ENCODE measurements at regions of chr16 and their contacts with region 1.

Region 1: DNA sequence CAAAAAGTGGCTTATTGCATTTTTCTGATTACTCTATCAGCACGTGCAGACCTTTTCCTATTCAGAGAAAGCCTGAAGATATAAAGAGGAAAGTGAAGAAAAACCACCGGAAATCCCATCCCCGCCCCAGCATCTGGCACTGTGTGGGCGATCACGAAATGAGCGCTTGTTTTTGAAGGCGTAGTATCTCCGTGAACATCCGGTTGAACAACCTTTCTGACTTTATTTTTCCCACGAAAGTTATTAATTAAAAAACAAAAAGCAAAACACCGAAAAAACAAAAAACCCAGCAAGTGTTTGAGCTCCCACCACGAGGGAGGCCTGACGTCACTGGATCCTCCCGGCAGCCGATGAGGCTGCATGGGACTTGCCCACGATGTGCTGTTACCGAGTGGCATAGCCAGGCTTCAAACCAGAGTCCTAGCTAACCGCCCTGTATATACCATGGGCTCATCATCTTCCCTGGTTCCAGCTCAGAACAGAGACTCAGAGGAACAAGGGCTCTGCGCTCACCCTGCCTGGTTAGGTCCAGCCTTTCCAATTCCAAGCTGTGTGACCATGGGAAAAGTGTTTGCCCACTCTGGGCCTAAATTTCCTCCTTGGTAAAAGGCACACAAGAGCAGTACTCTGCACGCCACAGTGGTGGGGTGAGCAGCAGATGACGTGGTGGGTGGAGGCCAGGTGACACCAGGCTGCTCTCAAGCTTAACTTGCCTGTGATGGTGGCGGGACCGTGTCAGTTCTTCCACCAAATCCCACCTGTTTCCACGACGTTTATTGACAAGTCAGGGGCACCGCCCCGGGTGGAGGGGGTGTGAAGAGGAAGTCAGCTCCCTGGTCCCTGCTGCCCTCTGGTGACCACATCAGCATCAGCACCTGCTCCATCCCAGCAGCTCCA is 34.3 kb upstream of the IL21R start:
- DNase-seq: peak; percentile 76
- ATAC-seq: peak; percentile 78
- H3K4me3 Mint-ChIP-seq: peak overlapping the region; percentile 70
- H3K27ac Mint-ChIP-seq: peak overlapping the region; percentile 96
- H3K4me1 Mint-ChIP-seq: peaks cover 71% of the 10 kb centered on the region
- H3K27me3 Mint-ChIP-seq: no peaks in the 10 kb centered on the region
- CTCF ChIP-seq: no peak

Region 2: GRCh38 chr16:25838724-25839186 is 1529.0 kb before region 1 on chr16:
- CTCF ChIA-PET with region 1: no interaction called
- POLR2A ChIA-PET with region 1: no interaction called
- intact Hi-C with region 1: loop called (anchors 10 kb)
- DNase-seq: no peak
- ATAC-seq: no peak
- H3K4me3 Mint-ChIP-seq: no peak overlapping the region
- H3K27ac Mint-ChIP-seq: no peak overlapping the region
- H3K4me1 Mint-ChIP-seq: no peaks in the 10 kb centered on the region
- H3K27me3 Mint-ChIP-seq: peaks cover 5% of the 10 kb centered on the region
- CTCF ChIP-seq: peak; percentile 72

Region 3: DNA sequence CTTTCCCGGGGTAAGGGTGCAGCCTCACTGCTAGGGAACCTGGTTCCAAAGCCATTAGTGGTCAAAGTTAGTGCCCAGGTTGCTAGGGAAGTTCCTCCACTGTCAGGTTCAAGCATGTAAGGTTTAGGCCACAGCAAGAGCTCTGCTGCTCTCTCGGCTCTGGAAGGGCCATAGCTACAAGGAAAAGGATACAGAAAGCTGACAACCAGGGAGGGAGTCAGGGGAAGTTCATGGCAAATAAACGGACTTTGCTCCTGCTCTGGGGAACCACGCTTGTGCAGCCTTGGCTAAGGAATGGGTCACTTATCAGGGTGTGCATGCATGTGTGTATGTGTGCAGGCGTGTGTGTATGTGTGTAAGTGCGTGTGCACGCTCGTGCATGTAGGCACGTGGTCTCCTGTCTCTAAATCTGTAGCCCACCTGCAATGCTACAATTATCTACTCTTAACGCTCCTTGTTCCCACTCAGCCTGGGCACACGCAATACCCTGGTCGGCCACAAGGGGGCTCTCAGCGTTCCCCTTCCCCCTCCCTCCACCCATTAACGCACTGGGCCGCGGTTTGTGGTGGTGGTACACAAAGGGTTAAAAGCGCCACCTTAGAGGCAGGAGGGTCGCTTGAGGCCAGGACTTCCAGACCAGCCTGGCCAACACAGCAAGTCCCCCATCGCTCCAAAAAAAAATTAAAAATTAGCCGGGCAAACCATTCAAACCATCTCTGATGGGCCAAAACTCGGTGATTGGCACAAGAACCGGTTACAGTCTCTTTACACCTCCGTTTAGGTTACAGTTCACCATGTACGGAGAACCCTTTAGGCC is 212.8 kb before region 1 on chr16:
- CTCF ChIA-PET with region 1: interaction called, 36 read pairs
- POLR2A ChIA-PET with region 1: no interaction called
- intact Hi-C with region 1: loop called (anchors 1 kb)
- DNase-seq: peak; percentile 64
- ATAC-seq: peak; percentile 93
- H3K4me3 Mint-ChIP-seq: no peak overlapping the region
- H3K27ac Mint-ChIP-seq: peak overlapping the region; percentile 59
- H3K4me1 Mint-ChIP-seq: peaks cover 11% of the 10 kb centered on the region
- H3K27me3 Mint-ChIP-seq: no peaks in the 10 kb centered on the region
- CTCF ChIP-seq: peak; percentile 94

Region 4: DNA sequence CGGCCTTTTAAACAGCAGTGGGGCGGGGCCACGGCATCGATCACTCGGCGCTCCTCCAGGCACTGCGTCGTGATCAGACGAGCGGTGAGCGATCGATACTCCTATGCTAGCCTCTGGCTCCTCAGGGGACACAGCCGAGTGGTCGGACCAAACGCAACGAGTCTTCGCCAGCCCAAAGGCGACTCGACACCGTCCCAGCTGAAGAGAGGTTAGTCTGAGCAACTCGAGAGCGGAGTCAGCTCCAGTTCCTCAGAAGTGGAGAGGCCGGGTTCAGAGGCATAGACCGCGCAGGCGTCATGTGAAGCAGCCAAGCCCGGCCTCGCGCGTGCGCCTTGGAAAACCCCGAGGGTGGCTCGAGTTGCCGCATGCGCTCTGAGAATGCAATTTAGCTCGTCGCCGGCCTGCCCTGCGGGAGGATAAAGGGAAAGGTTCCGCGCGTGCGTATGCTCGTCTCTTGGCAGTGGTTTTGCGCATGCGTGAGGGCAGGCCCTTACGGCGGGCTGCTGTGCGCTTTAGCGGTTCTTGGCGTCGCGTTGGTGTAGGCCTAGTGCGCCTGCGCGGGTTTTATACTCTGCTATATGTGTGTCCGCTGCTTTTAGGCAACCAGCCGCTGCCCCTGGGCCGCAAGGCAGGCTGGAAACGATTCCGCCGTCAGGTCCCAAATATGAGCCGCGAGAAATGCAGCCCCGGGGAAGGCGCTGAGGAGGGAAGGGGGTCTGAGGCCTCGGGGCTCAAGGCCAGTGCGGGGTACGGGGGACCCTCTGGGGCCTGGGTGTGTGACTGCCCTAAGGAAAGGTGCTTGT is 164.1 kb before region 1 on chr16 and contains the start of gene KDM8:
- CTCF ChIA-PET with region 1: interaction called, 3 read pairs
- POLR2A ChIA-PET with region 1: interaction called, 29 read pairs
- intact Hi-C with region 1: loop called (anchors 1 kb)
- DNase-seq: peak; percentile 97
- ATAC-seq: peak; percentile 87
- H3K4me3 Mint-ChIP-seq: peak within 1 kb of the TSS; percentile 99
- H3K27ac Mint-ChIP-seq: peak within 1 kb of the TSS; percentile 100
- H3K4me1 Mint-ChIP-seq: peaks cover 66% of the 10 kb centered on the region
- H3K27me3 Mint-ChIP-seq: no peaks in the 10 kb centered on the region
- CTCF ChIP-seq: no peak
- total RNA-seq, gene KDM8: 13.4 and 17.9 TPM in 2 replicates

Region 5: DNA sequence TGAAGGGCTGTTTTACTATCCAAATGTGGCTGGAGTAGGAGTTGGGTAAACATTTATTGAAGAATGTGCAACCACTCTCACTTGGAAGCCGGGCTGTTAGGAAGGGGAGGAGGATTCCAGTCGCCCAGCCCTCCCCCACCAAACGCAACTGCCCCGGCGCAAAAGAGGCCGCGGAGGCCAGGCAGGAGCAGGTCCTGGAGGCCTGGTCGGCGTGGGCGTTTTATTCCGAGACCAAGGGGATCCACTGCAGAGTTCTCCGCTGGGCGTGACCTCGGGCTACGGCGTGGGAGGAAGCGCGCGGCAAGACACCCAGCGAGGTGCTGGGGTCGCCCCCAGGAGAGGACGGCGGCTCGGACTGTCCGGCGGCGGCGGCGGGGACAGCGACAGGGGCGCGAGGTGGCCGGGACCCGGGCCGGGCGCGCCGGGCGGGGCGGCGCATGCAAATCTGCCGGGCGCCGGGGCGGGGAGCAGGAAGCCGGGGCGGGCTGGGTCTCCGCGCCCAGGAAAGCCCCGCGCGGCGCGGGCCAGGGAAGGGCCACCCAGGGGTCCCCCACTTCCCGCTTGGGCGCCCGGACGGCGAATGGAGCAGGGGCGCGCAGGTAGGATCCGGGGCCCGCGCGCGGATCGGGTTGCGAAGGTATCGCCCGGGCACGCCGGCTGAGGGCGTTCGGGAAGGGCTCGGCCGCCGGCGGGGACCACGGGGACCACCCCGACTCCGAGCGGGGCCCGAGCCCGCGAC is 54.1 kb before region 1 on chr16 and contains the start of gene IL4R:
- CTCF ChIA-PET with region 1: interaction called, 7 read pairs
- POLR2A ChIA-PET with region 1: interaction called, 27 read pairs
- intact Hi-C with region 1: loop called (anchors 1 kb)
- DNase-seq: peak; percentile 77
- ATAC-seq: peak; percentile 49
- H3K4me3 Mint-ChIP-seq: peak within 1 kb of the TSS; percentile 88
- H3K27ac Mint-ChIP-seq: peak within 1 kb of the TSS; percentile 90
- H3K4me1 Mint-ChIP-seq: peaks cover 76% of the 10 kb centered on the region
- H3K27me3 Mint-ChIP-seq: no peaks in the 10 kb centered on the region
- CTCF ChIP-seq: no peak
- total RNA-seq, gene IL4R: 176 and 202 TPM in 2 replicates

Region 6: GRCh38 chr16:27401768-27402568 is 34.3 kb after region 1 on chr16 and contains the start of gene IL21R:
- CTCF ChIA-PET with region 1: interaction called, 53 read pairs
- POLR2A ChIA-PET with region 1: interaction called, 1,103 read pairs
- intact Hi-C with region 1: loop called (anchors 1 kb)
- DNase-seq: peak; percentile 76
- ATAC-seq: peak; percentile 53
- H3K4me3 Mint-ChIP-seq: peak within 1 kb of the TSS; percentile 99
- H3K27ac Mint-ChIP-seq: peak within 1 kb of the TSS; percentile 96
- H3K4me1 Mint-ChIP-seq: peaks cover 88% of the 10 kb centered on the region
- H3K27me3 Mint-ChIP-seq: no peaks in the 10 kb centered on the region
- CTCF ChIP-seq: no peak
- total RNA-seq, gene IL21R: 144 and 167 TPM in 2 replicates

Region 7: DNA sequence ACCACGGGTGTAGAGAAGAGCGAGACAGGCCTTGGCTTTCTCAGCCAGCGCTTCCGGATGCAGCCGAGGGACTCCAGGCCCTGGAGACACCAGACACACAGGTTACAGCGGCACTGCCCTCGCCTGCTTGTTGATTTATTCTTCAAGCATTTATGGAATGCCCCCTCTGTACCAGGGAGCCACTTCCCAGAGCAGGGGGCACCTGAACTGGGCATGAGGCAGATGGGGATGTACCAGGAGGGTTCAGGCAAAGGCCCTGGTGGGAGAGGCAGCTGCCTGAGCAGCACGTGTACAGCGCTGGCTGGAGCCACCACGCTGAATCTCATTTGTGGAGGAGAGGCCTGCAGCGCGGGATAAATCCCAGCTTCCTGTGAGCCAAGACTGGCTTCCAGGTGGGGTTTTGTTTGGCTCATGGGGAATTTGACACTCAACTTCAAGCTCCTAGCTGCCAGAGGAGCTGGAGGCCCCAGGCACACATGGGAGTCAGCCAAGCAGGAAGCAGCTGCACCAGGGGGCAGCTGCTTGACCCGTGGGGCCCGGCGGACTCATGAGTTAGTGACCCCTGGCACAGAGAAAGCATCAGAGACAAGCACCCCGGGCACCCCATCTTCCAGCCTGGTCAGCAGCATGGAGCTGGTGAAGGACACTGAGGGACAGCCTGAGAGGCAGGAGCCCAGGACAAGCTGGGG is 93.9 kb after region 1 on chr16:
- CTCF ChIA-PET with region 1: interaction called, 3 read pairs
- POLR2A ChIA-PET with region 1: interaction called, 6 read pairs
- intact Hi-C with region 1: loop called (anchors 1 kb)
- DNase-seq: no peak
- ATAC-seq: no peak
- H3K4me3 Mint-ChIP-seq: no peak overlapping the region
- H3K27ac Mint-ChIP-seq: no peak overlapping the region
- H3K4me1 Mint-ChIP-seq: peaks cover 8% of the 10 kb centered on the region
- H3K27me3 Mint-ChIP-seq: no peaks in the 10 kb centered on the region
- CTCF ChIP-seq: no peak

Region 8: DNA sequence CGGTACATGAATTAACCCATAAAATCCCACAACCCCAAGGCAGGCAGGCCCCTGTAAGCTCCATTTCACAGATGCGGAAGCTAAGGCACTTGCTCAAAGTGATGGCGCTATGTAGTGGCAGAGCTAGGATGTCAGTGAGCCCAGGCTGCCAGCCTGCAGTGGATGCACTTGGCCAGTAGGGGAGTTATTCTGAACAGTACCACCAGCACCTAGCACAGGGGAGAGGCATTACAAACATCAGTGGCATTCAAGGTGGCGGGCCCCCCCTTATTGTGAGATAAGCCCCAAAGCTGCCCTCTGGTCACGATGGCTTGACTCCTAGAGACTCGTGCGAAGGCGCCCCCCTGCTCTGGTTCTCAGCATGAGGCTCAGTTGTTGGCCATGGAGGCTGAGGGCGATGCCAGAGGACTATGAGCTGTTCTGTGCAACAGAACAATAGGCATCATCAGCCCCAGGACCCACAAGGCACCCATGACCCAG is 148.2 kb after region 1 on chr16:
- CTCF ChIA-PET with region 1: no interaction called
- POLR2A ChIA-PET with region 1: no interaction called
- intact Hi-C with region 1: no loop called
- DNase-seq: no peak
- ATAC-seq: peak; percentile 42
- H3K4me3 Mint-ChIP-seq: no peak overlapping the region
- H3K27ac Mint-ChIP-seq: no peak overlapping the region
- H3K4me1 Mint-ChIP-seq: no peaks in the 10 kb centered on the region
- H3K27me3 Mint-ChIP-seq: no peaks in the 10 kb centered on the region
- CTCF ChIP-seq: no peak